Activated CD4-positive, alpha-beta memory T cell treated with anti-CD3 and anti-CD28 coated beads for 36 hours (primary cell): ENCODE measurements at regions of chr11 and their contacts with region 1.

Region 1: DNA sequence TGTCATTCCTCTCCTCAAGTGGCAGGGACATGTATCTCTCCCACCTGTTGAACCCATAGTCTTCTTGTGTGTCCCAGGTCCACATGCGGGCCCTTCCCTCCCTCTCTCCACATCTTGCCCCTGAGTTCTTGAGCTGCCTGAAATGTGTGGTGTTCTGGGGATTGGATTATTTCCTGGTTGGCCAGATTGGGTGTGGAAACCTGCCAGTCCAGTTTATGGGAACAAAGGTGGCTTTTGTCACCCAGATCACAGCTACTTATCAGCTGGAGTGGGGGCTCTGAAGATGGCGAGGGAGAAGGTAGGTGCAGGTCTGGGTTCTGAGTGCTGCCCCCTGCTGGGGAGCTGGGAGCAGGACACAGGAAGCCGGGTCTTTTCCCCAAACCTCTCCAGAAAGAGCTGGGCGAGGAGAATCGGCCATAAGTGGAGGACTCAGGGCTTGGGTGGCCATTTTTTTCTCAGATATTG is 14.2 kb downstream of the DTX4 start:
- DNase-seq: peak; percentile 70
- H3K4me3 Mint-ChIP-seq: no peak overlapping the region
- H3K27ac Mint-ChIP-seq: no peak overlapping the region
- H3K4me1 Mint-ChIP-seq: peaks cover 2% of the 10 kb centered on the region
- H3K27me3 Mint-ChIP-seq: no peaks in the 10 kb centered on the region

Region 2: GRCh38 chr11:58707767-58708166 is 478.4 kb before region 1 on chr11:
- CTCF ChIA-PET with region 1: no interaction called
- POLR2A ChIA-PET with region 1: no interaction called
- intact Hi-C with region 1: no loop called
- DNase-seq: no peak
- H3K4me3 Mint-ChIP-seq: no peak overlapping the region
- H3K27ac Mint-ChIP-seq: no peak overlapping the region
- H3K4me1 Mint-ChIP-seq: no peaks in the 10 kb centered on the region
- H3K27me3 Mint-ChIP-seq: no peaks in the 10 kb centered on the region

Region 3: GRCh38 chr11:59197991-59198390 is 11.8 kb after region 1 on chr11:
- CTCF ChIA-PET with region 1: interaction called, 30 read pairs
- POLR2A ChIA-PET with region 1: no interaction called
- intact Hi-C with region 1: no loop called
- DNase-seq: no peak
- H3K4me3 Mint-ChIP-seq: no peak overlapping the region
- H3K27ac Mint-ChIP-seq: no peak overlapping the region
- H3K4me1 Mint-ChIP-seq: peaks cover 16% of the 10 kb centered on the region
- H3K27me3 Mint-ChIP-seq: no peaks in the 10 kb centered on the region

Region 4: DNA sequence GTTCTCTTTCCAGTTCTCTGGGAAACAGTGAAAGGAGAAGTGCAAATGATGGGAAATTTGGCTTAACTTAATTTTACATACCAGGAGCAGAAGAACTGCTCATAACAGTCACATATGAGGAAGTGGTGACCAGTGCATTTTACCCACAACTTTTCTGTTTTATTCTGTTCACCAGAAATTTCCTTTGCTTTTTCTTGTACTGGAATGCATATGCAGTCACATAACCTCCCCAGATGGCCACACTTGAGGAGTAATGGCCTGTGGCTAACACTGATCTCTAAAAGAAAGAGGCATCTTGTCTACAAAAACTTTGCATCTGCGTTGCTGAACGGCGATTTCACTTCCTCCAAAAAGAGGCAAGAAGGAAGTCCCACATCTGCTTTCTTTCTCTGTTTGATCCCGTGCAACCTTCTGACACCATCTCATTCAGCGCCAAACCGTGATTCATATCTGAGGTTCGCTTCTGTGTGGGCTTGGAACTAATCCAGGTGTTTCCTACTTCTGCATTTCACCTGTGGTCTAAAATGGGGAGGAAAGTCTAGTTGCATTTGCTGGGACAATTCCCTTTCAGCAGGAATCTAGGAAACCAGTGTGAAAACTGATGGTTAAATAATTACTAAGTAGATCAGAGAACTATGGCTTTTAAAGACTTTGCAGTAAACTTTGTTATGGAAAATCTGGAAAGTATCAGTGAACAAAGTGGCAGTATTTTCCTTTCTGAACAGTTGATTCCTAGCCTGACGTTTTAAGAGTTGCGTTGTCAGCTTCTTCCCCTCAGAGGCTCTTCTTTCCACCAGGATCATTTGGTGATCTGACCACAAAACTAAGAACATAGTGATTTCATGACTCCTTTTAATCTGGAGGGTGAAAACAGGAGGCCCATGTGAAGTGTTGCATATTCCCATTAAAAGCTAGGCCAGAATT is 30.7 kb after region 1 on chr11:
- CTCF ChIA-PET with region 1: interaction called, 12 read pairs
- POLR2A ChIA-PET with region 1: no interaction called
- intact Hi-C with region 1: no loop called
- DNase-seq: peak; percentile 52
- H3K4me3 Mint-ChIP-seq: no peak overlapping the region
- H3K27ac Mint-ChIP-seq: no peak overlapping the region
- H3K4me1 Mint-ChIP-seq: peaks cover 13% of the 10 kb centered on the region
- H3K27me3 Mint-ChIP-seq: peaks cover 2% of the 10 kb centered on the region

Region 5: GRCh38 chr11:59283825-59284772 is 97.9 kb after region 1 on chr11:
- CTCF ChIA-PET with region 1: interaction called, 11 read pairs
- POLR2A ChIA-PET with region 1: no interaction called
- intact Hi-C with region 1: no loop called
- DNase-seq: peak; percentile 58
- H3K4me3 Mint-ChIP-seq: peak overlapping the region; percentile 42
- H3K27ac Mint-ChIP-seq: no peak overlapping the region
- H3K4me1 Mint-ChIP-seq: peaks cover 14% of the 10 kb centered on the region
- H3K27me3 Mint-ChIP-seq: peaks cover 5% of the 10 kb centered on the region

Region 6: GRCh38 chr11:59753650-59754493 is 567.7 kb after region 1 on chr11:
- CTCF ChIA-PET with region 1: no interaction called
- POLR2A ChIA-PET with region 1: no interaction called
- intact Hi-C with region 1: no loop called
- DNase-seq: peak; percentile 88
- H3K4me3 Mint-ChIP-seq: peak overlapping the region; percentile 84
- H3K27ac Mint-ChIP-seq: no peak overlapping the region
- H3K4me1 Mint-ChIP-seq: peaks cover 17% of the 10 kb centered on the region
- H3K27me3 Mint-ChIP-seq: peaks cover 3% of the 10 kb centered on the region